Activated CD4-positive, alpha-beta memory T cell treated with anti-CD3 and anti-CD28 coated beads, Interleukin-2, amount 10 ng/mL, durations not matched to agents 7 days and 5 days (primary cell): ENCODE measurements at regions of chr19 and their contacts with region 1.

Region 1: DNA sequence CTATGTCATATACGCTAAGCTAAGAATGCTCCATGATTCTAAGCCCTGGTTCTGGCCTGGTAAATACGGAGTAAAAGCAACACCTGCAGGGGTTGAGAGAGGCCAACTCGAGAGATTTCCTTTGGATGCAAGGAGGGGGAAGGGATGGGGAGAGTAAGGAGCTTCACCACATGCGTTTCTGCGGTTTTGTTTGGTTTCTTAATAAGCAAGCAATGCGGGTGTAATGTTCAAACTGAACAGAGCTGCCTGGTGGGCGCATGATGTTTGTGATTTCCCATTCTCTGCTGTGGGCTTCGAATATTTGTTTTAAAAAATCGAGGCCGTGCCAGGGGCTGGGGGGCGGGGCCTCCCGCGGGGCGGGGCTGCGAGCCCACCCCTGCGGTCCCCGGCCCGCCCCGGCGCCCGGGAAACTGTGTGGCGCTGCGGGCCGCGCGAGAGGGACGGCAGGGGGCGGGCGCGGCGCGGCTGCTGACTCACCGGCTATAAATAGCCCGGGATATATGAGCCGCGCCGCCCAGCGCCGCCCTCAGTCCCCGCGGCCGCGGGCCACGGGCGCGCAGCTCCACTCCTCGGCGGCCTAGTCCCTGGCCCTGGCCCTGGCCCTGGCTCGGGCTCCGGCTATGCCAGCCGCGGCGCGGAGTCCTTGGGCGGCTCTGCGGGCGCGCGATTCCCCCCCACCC is 5.1 kb downstream of the BBC3 start:
- DNase-seq: peak; percentile 88
- H3K4me3 Mint-ChIP-seq: peak overlapping the region; percentile 79
- H3K27ac Mint-ChIP-seq: peak overlapping the region; percentile 89
- H3K4me1 Mint-ChIP-seq: peaks cover 18% of the 10 kb centered on the region
- H3K27me3 Mint-ChIP-seq: no peaks in the 10 kb centered on the region

Region 2: DNA sequence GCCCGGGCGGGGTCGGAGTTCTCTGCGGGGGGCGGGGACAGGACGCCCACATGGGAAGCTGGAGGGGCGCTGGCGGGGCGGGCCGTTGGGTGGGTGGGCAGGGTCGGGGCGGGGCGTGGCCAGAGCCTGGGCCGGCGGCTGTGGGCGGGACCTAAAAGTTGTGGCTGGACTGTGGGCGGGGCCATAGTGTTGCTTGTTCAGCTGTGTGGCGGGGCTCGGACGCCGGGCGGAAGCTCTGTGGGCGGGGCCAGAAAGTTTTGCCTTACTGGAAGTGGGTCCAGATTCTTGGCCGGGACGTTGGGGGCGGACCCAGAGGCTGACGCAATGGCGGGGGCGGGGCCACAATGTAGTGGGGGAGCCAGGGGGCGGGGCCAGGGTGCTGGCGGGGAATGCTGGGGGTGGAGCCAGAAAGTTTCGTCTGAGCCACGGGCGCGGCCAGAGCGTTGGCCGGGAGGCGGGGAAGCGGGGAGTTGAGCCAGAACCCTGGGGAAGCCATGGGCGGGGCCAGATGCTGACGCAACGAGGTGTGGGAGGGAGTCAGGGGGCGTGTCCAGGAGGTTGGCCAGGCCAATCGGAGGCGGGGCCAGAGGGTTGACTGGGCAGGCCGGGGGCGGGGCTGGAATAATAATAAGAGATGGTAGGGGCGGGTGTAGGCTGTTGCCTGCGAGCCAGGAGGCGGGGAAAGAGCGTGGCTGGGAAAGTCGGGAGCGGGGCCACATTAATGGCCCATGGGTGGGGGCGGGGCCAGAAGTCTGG is 31.0 kb after region 1 on chr19:
- CTCF ChIA-PET with region 1: interaction called, 11 read pairs
- POLR2A ChIA-PET with region 1: interaction called, 29 read pairs
- DNase-seq: peak; percentile 100
- H3K4me3 Mint-ChIP-seq: peak overlapping the region; percentile 85
- H3K27ac Mint-ChIP-seq: peak overlapping the region; percentile 85
- H3K4me1 Mint-ChIP-seq: peaks cover 40% of the 10 kb centered on the region
- H3K27me3 Mint-ChIP-seq: no peaks in the 10 kb centered on the region